Ascending aorta (tissue), 2 donors: ENCODE measurements at regions of chr9 and their contacts with region 1.

Region 1: GRCh38 chr9:32631991-32632390 is 3.5 kb downstream of the TAF1L start:
- DNase-seq: no peak
- H3K4me3 ChIP-seq: no peak overlapping the region
- H3K27ac ChIP-seq: no peak overlapping the region
- H3K4me1 ChIP-seq: no peaks in the 10 kb centered on the region
- H3K27me3 ChIP-seq: no peaks in the 10 kb centered on the region
- CTCF ChIP-seq: no peak

Region 2: DNA sequence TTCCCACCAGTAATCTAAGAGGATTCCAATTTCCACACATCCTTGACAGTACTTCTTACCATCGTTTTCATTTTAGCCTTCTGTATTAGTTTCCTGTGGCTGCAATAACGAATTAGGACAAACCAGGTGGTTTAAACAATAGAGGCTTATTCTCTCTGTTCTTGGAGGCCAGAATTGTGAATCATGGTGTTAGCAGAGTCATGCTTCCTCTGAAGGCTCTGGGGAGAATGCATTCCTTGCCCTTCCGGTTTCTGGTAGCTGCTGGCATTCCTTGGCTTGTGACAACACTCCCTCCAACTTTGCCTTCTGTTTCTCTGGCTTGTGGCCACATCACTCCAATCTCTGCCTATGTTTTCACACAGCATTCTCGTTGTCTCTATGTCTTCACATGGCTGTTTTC is 129.5 kb before region 1 on chr9:
- intact Hi-C with region 1: no loop called
- DNase-seq: no peak
- H3K4me3 ChIP-seq: no peak overlapping the region
- H3K27ac ChIP-seq: no peak overlapping the region
- H3K4me1 ChIP-seq: no peaks in the 10 kb centered on the region
- H3K27me3 ChIP-seq: no peaks in the 10 kb centered on the region
- CTCF ChIP-seq: no peak

Region 3: GRCh38 chr9:32698779-32699178 is 66.8 kb after region 1 on chr9:
- intact Hi-C with region 1: loop called (anchors 10 kb)
- DNase-seq: no peak
- H3K4me3 ChIP-seq: no peak overlapping the region
- H3K27ac ChIP-seq: no peak overlapping the region
- H3K4me1 ChIP-seq: no peaks in the 10 kb centered on the region
- H3K27me3 ChIP-seq: no peaks in the 10 kb centered on the region
- CTCF ChIP-seq: no peak